ENCODE measurements at regions of chrX and their contacts with region 1.

Region 1: GRCh38 chrX:106791495-106791894 is 11.0 kb upstream of the TBC1D8B start:
- DNase-seq: no peak
- ATAC-seq: no peak
- H3K4me3 ChIP-seq: no peak overlapping the region
- H3K27ac ChIP-seq: no peak overlapping the region
- H3K4me1 ChIP-seq: no peaks in the 10 kb centered on the region
- H3K27me3 ChIP-seq: no peaks in the 10 kb centered on the region
- CTCF ChIP-seq: peak in 2 of 5 experiments; percentile 18 to 29
- POLR2A ChIP-seq: no peak

Region 2: GRCh38 chrX:106481341-106481740 is 310.2 kb before region 1 on chrX:
- in situ Hi-C with region 1: loop called (anchors 10 to 25 kb)
- intact Hi-C with region 1: loop called (anchors 2 kb)
- DNase-seq: peak in 1 of 2 donors; percentile 2
- ATAC-seq: peak; percentile 65 to 87
- H3K4me3 ChIP-seq: no peak overlapping the region
- H3K27ac ChIP-seq: no peak overlapping the region
- H3K4me1 ChIP-seq: no peaks in the 10 kb centered on the region
- H3K27me3 ChIP-seq: no peaks in the 10 kb centered on the region
- CTCF ChIP-seq: peak; percentile 52 to 84 (median 67)
- POLR2A ChIP-seq: no peak